ENCODE measurements at regions of chr10 and their contacts with region 1.

Region 1: DNA sequence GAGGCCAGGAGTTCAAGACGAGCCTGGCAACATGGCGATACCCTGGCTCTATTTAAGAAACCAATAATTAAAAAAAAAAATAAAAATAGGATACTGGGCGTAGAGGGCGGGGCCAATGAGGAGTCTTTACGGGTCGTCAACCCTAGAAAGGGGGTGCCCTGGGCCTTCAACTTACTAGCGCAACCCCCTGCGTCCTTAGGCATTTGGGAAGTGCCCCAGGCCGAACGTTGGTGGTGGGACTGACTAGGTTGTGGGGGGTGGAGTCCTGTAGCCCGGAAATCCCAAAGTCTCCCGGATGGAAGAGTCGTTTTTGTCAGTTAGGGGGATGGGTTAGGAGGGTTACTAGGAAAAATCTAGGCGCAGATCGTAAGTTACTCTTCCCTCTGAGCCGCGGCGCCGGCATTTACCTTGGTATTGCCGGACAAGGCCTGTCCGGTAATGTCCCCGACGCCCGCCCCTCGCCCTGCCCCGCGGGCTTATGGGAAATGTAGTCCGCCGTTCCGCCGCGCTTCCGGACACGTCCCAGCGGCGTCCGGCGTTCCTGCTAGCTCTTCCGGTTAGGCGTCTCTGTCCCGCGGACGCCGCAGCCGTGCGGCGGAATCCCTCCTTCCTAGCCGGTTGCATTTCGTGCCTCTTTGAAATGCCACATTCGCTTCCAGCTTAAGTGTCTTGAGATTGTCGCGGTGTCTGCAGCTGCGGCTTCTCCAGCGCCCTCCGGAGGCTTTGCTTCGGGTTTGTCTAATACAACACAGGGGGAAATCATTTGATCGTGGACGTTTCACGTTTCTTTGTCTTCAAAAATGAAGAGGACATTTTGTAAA is 1.3 kb upstream of the ACBD5 start:
- DNase-seq: peak; percentile 98
- H3K4me3 ChIP-seq: peak overlapping the region; percentile 78
- H3K27ac ChIP-seq: peak overlapping the region; percentile 91
- H3K4me1 ChIP-seq: peaks cover 18% of the 10 kb centered on the region
- H3K27me3 ChIP-seq: no peaks in the 10 kb centered on the region
- CTCF ChIP-seq: peak; percentile 71

Region 2: GRCh38 chr10:26172131-26172530 is 1069.7 kb before region 1 on chr10:
- CTCF ChIA-PET with region 1: no interaction called
- POLR2A ChIA-PET with region 1: no interaction called
- intact Hi-C with region 1: no loop called
- DNase-seq: no peak
- H3K4me3 ChIP-seq: no peak overlapping the region
- H3K27ac ChIP-seq: no peak overlapping the region
- H3K4me1 ChIP-seq: peaks cover 12% of the 10 kb centered on the region
- H3K27me3 ChIP-seq: no peaks in the 10 kb centered on the region
- CTCF ChIP-seq: no peak

Region 3: DNA sequence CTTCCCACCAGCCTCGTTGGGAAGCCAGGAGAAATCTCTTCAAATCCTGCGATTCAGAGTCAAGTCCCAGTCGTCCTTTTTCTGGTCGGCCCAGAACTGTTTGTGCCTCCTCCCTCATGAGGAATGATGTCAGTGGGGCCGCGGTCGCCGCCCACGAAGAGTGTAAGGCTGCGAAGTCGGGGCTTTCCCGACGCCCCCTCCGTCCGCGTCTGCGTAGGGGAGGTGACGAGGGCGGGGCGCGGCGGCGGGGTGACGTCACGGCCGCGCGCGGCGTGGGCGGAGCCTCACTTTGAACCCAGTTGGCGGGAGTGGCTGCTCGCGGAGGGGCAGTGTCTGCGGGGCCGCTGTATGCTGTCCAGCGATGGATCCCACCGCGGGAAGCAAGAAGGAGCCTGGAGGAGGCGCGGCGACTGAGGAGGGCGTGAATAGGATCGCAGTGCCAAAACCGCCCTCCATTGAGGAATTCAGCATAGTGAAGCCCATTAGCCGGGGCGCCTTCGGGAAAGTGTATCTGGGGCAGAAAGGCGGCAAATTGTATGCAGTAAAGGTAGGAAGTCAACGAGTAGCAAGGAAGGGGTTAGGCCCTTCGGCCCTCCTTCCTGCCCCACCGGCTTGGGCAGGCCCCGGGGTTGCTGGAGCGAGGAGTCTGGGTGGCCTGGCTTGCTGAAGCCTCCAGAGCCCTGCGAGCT is 86.7 kb before region 1 on chr10 and contains the start of gene MASTL:
- CTCF ChIA-PET with region 1: interaction called, 4 read pairs
- POLR2A ChIA-PET with region 1: no interaction called
- intact Hi-C with region 1: loop called (anchors 2 kb)
- DNase-seq: peak; percentile 93
- H3K4me3 ChIP-seq: peak within 1 kb of the TSS; percentile 90
- H3K27ac ChIP-seq: peak within 1 kb of the TSS; percentile 98
- H3K4me1 ChIP-seq: peaks cover 9% of the 10 kb centered on the region
- H3K27me3 ChIP-seq: no peaks in the 10 kb centered on the region
- CTCF ChIP-seq: no peak
- total RNA-seq, gene MASTL: 44.4 and 44.9 TPM in 2 replicates

Region 4: GRCh38 chr10:27360581-27361172 is 118.8 kb after region 1 on chr10:
- CTCF ChIA-PET with region 1: no interaction called
- POLR2A ChIA-PET with region 1: no interaction called
- intact Hi-C with region 1: no loop called
- DNase-seq: peak; percentile 89
- H3K4me3 ChIP-seq: no peak overlapping the region
- H3K27ac ChIP-seq: no peak overlapping the region
- H3K4me1 ChIP-seq: no peaks in the 10 kb centered on the region
- H3K27me3 ChIP-seq: no peaks in the 10 kb centered on the region
- CTCF ChIP-seq: peak; percentile 92